K562 (cell line): ENCODE measurements at regions of chr13 and their contacts with region 1.

Region 1: GRCh38 chr13:95536632-95537241 is 15.8 kb upstream of the CLDN10 start:
- DNase-seq: peak in 1 of 4 experiments; percentile 11
- ATAC-seq: no peak
- H3K4me3 ChIP-seq: no peak overlapping the region
- H3K27ac ChIP-seq: no peak overlapping the region
- H3K4me1 ChIP-seq: no peaks in the 10 kb centered on the region
- H3K27me3 ChIP-seq: no peaks in the 10 kb centered on the region
- CTCF ChIP-seq: peak in 2 of 3 experiments; percentile 39 to 55; a peak in 4 of 6 replicates
- EP300 ChIP-seq: no peak
- POLR2A ChIP-seq: no peak
- RAD21 ChIP-seq: peak; percentile 26 to 53

Region 2: GRCh38 chr13:95660981-95661581 is 124.3 kb after region 1 on chr13:
- CTCF ChIA-PET with region 1: no interaction called
- POLR2A ChIA-PET with region 1: no interaction called
- in situ Hi-C with region 1: no loop called
- intact Hi-C with region 1: loop called (anchors 5 kb)
- DNase-seq: peak; percentile 12 to 41 (median 22)
- ATAC-seq: peak; percentile 51; the same call in 1 of the 3 replicates
- H3K4me3 ChIP-seq: no peak overlapping the region
- H3K27ac ChIP-seq: no peak overlapping the region
- H3K4me1 ChIP-seq: peaks cover 0 to 5% of the 10 kb centered on the region in 2 experiments; a peak in 1 of 5 replicates
- H3K27me3 ChIP-seq: no peaks in the 10 kb centered on the region
- CTCF ChIP-seq: peak; percentile 29 to 64 (median 39); a peak in 3 of 6 replicates
- EP300 ChIP-seq: no peak
- POLR2A ChIP-seq: no peak
- RAD21 ChIP-seq: peak in 1 of 2 experiments; percentile 52; a peak in 2 of 4 replicates